PC-9 (cell line): ENCODE measurements at regions of chr1 and their contacts with region 1.

Region 1: DNA sequence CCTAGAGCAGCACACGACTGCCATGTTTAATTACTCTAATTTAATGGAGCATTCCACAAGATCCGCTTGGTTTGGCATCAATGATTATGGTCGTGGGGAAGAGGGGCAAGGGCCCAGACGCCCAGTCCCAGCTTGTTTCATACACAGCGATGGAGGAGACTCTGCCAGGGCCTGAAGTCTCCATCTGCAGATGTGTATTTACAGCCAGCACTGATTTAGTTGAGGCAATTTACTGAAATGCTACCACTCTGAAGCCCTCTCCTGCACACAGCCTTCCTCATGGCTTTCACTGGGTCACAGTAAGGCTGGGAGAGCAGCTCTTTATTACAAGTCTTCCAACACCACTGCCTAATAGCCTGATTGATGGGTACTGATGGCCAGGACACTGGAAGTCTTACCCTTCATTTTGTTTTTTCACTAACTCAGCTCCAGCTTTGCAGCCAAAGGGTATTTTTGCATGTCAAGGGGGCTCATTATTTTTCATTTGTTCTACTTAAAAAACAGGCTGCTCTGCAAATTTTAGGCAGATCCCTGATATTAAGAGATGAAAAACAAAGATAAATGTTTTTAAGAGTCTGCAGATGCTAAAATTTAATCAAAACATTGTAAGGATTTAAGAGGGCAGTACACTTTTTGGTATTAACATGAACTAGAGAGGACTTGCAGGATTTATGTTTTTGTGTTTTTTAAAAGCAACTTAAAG is 236.3 kb downstream of the SIPA1L2 start:
- DNase-seq: no peak
- H3K4me3 ChIP-seq: no peak overlapping the region
- H3K27ac ChIP-seq: no peak overlapping the region
- H3K4me1 ChIP-seq: no peaks in the 10 kb centered on the region
- H3K27me3 ChIP-seq: no peaks in the 10 kb centered on the region; the same call in 1 of the 2 replicates
- CTCF ChIP-seq: no peak

Region 2: GRCh38 chr1:232123775-232124659 is 269.6 kb before region 1 on chr1:
- CTCF ChIA-PET with region 1: no interaction called
- POLR2A ChIA-PET with region 1: no interaction called
- intact Hi-C with region 1: no loop called
- DNase-seq: no peak
- H3K4me3 ChIP-seq: no peak overlapping the region
- H3K27ac ChIP-seq: no peak overlapping the region
- H3K4me1 ChIP-seq: no peaks in the 10 kb centered on the region
- H3K27me3 ChIP-seq: peaks cover 3% of the 10 kb centered on the region; the same call in 1 of the 2 replicates
- CTCF ChIP-seq: no peak

Region 3: GRCh38 chr1:232416026-232416568 is 22.5 kb after region 1 on chr1:
- CTCF ChIA-PET with region 1: no interaction called
- POLR2A ChIA-PET with region 1: no interaction called
- intact Hi-C with region 1: loop called (anchors 1 kb)
- DNase-seq: no peak
- H3K4me3 ChIP-seq: no peak overlapping the region
- H3K27ac ChIP-seq: no peak overlapping the region
- H3K4me1 ChIP-seq: no peaks in the 10 kb centered on the region
- H3K27me3 ChIP-seq: peaks cover 24% of the 10 kb centered on the region; the same call in 1 of the 2 replicates
- CTCF ChIP-seq: no peak